Activated CD4-positive, alpha-beta T cell treated with anti-CD3 and anti-CD28 coated beads, Interleukin-2, amount 10 ng/mL, durations not matched to agents 24 days and 14 days (primary cell): ENCODE measurements at regions of chr12 and their contacts with region 1.

Region 1: DNA sequence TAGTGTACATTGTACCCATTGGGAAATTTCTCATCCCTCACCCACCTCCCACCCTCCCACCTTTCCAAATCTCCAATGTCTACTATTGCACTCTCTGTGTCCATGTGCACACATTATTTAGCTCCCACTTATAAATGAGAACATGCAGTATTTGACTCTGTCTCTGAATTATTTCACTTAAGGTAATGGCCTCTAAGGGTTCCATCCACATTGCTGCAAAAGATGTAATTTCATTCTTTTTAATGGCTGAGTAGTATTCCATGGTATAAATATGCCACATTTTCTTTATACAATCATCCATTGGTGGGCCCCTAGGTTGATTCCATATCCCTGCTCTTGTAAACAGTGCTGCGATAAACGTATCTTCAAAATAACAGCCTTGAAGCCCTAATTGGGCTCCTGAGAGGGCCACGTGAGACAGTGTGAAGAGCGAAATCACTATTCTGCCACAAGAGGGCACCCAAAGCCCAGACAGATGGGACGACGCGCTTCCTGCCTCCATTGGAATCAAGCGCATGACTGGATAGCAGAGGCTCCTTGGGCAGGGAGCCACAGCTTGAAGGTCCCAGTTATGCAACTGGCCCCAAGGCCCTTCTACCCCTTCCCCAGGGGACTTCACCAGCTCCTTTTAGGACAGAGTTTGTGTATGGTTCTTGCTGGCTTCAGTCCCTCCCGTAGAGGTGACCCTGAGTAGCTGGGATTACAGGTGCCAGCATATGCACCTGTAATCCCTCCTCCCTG is 21.3 kb upstream of the CD27 start:
- DNase-seq: peak; percentile 93
- H3K4me3 Mint-ChIP-seq: peak overlapping the region; percentile 17
- H3K27ac Mint-ChIP-seq: peak overlapping the region; percentile 84
- H3K4me1 Mint-ChIP-seq: peaks cover 40% of the 10 kb centered on the region
- H3K27me3 Mint-ChIP-seq: no peaks in the 10 kb centered on the region

Region 2: DNA sequence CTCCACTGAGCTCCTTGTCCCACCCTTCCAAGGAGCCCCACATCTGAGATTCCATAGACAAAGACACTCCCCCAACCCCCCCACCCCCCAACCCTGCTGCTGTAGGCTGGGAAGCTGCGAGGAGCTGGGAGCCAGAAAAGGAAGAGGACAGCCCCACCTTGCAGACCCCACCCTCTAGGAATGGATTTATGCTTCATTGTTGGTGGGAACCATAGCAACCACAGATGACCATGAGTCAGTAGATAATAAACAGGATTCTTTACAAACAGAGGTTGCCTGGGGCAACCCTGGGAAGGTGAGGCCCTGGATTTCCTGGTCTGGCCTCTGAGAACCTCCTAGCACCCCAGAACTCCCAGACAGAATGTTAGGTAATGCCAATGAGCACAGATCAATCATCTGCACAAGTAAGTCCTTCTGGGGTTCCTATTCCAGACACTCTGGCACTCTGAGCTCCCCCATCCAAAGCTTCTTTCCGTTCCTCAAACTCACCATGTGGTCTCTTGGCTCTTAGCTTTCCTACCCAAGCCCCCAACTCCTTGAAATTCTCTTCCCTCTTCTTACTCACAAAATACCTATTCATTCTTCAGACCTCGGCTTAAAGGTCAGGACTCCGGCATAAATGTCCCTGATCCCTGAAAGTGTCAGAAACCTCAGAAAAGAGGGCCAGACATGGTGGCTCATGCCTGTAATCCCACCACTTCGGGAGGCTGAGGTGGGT is 128.2 kb before region 1 on chr12:
- intact Hi-C with region 1: no loop called
- DNase-seq: no peak
- H3K4me3 Mint-ChIP-seq: no peak overlapping the region
- H3K27ac Mint-ChIP-seq: no peak overlapping the region
- H3K4me1 Mint-ChIP-seq: peaks cover 3% of the 10 kb centered on the region
- H3K27me3 Mint-ChIP-seq: peaks cover 16% of the 10 kb centered on the region

Region 3: GRCh38 chr12:6443361-6443983 is 20.0 kb after region 1 on chr12:
- intact Hi-C with region 1: loop called (anchors 1 kb)
- DNase-seq: peak; percentile 73
- H3K4me3 Mint-ChIP-seq: peak overlapping the region; percentile 93
- H3K27ac Mint-ChIP-seq: peak overlapping the region; percentile 94
- H3K4me1 Mint-ChIP-seq: peaks cover 65% of the 10 kb centered on the region
- H3K27me3 Mint-ChIP-seq: no peaks in the 10 kb centered on the region

Region 4: GRCh38 chr12:6461401-6462233 is 38.2 kb after region 1 on chr12:
- intact Hi-C with region 1: loop called (anchors 1 kb)
- DNase-seq: peak; percentile 95
- H3K4me3 Mint-ChIP-seq: peak overlapping the region; percentile 84
- H3K27ac Mint-ChIP-seq: peak overlapping the region; percentile 97
- H3K4me1 Mint-ChIP-seq: peaks cover 76% of the 10 kb centered on the region
- H3K27me3 Mint-ChIP-seq: no peaks in the 10 kb centered on the region

Region 5: GRCh38 chr12:6493497-6494257 is 70.2 kb after region 1 on chr12 and contains the start of gene NCAPD2:
- intact Hi-C with region 1: loop called (anchors 1 kb)
- DNase-seq: peak; percentile 99
- H3K4me3 Mint-ChIP-seq: peak within 1 kb of the TSS; percentile 95
- H3K27ac Mint-ChIP-seq: peak within 1 kb of the TSS; percentile 98
- H3K4me1 Mint-ChIP-seq: peaks cover 34% of the 10 kb centered on the region
- H3K27me3 Mint-ChIP-seq: no peaks in the 10 kb centered on the region
- total RNA-seq, gene NCAPD2: 104 and 106 TPM in 2 replicates

Region 6: DNA sequence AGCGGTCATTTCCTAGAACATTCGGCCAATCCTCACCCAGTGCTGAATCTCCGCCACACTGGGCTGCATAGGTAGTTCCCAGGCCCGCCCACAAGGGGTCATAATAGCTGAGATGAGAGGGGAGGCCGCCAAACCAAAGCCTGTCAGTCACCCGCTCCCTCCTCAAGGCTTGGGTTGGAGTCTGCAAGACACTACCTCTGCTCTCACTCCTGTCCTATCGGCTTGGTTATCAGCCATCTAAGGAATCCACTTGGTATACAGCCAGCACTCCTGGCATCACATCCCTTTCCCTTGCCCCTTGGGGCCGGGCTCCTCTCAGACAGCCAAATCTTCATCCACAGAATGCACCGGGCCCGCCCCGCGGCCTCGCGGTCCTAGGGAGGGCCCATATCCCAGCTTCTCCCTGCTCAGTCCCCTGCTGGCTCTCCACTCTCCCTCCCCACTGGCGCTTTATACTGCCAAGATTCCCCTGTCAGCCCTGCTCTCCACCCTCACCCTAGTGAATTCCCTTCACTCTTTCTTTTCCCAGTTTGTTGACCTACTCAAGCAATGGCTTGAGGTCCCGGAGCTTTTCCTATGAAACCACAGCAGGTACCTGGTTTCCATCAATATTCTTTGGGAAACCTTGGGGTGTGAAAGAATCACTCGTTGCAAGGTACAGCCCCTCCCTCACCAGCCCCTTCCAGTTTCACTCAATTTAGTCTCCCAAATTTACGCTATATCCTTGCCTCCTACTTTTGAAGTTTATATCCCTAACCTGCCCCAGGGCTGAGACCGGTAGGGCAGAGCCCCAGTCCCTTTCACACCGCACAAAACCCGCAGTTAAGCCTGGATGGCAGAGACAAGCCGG is 131.0 kb after region 1 on chr12:
- intact Hi-C with region 1: loop called (anchors 1 kb)
- DNase-seq: peak; percentile 86
- H3K4me3 Mint-ChIP-seq: peak overlapping the region; percentile 92
- H3K27ac Mint-ChIP-seq: peak overlapping the region; percentile 81
- H3K4me1 Mint-ChIP-seq: peaks cover 39% of the 10 kb centered on the region
- H3K27me3 Mint-ChIP-seq: no peaks in the 10 kb centered on the region